Cardiac septum (tissue), 1 donor: ENCODE measurements at regions of chr12 and their contacts with region 1.

Region 1: DNA sequence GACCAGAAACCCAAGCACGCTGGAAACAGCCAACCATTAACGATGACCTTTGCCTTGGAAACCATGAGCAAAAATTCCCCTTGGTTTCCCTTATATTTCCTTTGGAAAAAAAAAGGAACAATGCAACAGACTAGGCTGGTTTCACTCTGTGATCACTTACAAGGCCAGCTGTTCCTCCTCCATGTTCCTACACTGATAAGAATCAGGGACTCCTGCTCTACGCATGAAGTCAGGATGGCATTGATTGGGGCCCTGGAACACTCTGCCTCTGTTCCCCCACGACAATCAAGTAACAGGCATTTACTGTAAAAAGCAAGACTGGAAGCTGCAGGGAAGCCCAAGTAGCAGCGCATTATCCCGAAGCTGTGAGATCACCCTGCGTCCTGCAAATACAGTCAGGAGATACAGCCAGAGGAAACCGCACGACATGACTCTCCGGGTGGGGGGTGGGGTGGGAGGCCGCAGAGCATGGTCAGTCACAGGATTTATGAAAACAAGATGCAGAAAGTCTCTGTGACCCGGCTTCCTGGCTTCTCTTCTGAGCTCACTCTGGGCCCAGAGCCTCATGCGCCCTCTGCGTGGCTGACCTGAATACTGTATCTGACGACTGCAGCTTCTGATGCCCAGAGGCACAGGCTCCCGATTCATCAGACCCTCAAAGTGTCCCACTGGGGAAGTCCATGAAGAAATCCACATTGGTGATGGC is 31.1 kb downstream of the SSH1 start:
- DNase-seq: peak; percentile 87

Region 2: GRCh38 chr12:108838194-108839017 is 12.2 kb after region 1 on chr12:
- intact Hi-C with region 1: loop called (anchors 1 kb)
- DNase-seq: peak; percentile 96